CD4-positive, alpha-beta memory T cell (primary cell): ENCODE measurements at regions of chr2 and their contacts with region 1.

Region 1: GRCh38 chr2:174341286-174341994 is 6.7 kb downstream of the SP9 start:
- DNase-seq: peak; percentile 83 to 89 (median 86)
- H3K4me3 ChIP-seq: peak overlapping the region in 1 of 2 donors; percentile 18
- H3K4me3 Mint-ChIP-seq: peak overlapping the region; percentile 13 to 95 (median 79)
- H3K27ac ChIP-seq: no peak overlapping the region
- H3K27ac Mint-ChIP-seq: peak overlapping the region in 6 of 7 donors; percentile 65 to 97 (median 88)
- H3K4me1 ChIP-seq: peaks cover 56% of the 10 kb centered on the region
- H3K4me1 Mint-ChIP-seq: peaks cover 18 to 48% (median 32%) of the 10 kb centered on the region in 4 donors
- H3K27me3 ChIP-seq: peaks cover 70% of the 10 kb centered on the region
- H3K27me3 Mint-ChIP-seq: peaks cover 47 to 51% of the 10 kb centered on the region in 2 donors

Region 2: DNA sequence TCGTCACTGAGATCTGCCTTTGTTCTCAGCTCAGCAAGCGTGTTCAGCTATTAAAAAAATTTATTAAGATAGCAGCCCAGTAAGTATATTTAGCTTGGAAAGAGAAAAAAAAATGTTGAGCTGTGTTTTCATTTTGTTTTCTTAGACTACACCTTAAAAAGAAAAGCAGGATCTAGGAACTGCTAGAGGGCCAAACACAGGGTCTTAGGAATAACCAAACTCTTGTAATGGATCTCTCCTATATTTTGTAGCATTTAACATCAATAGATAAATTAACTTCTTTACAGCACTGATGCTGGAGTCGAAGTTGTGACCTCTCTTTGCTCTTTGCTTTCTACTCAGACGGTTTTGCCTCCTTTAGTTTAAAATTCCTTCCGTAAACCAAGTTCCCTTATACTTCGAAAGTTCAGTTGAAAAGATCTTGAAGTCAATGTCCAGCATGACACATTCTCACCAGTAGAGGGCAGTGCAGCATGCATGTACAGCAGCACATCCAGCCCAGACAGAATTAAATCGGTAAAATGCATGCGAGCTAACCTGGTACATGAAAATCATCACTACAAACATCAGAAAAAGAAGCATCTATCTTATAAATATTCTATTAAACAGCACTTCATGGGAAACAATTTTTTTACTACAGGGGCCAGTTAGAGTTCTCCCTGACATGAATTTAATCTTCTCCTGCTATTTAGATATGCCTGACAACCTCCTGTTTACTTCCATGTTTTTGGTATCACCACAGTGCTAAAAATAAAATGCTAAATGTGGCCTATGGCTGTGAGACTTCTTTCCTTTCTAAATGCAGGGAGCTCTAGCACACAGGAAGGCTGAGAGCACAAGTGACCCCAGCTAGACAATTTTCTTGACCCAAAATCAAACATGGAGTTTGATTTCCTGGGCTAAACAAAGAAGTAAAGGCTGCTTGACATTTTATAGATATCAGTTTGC is 1314.0 kb before region 1 on chr2:
- CTCF ChIA-PET with region 1: interaction called, 33 read pairs
- POLR2A ChIA-PET with region 1: no interaction called
- intact Hi-C with region 1: loop called (anchors 1 kb)
- DNase-seq: peak; percentile 62 to 68 (median 65)
- H3K4me3 ChIP-seq: no peak overlapping the region
- H3K4me3 Mint-ChIP-seq: peak overlapping the region in 1 of 8 donors; percentile 41
- H3K27ac ChIP-seq: no peak overlapping the region
- H3K27ac Mint-ChIP-seq: no peak overlapping the region
- H3K4me1 ChIP-seq: no peaks in the 10 kb centered on the region
- H3K4me1 Mint-ChIP-seq: peaks cover 0 to 3% (median 1%) of the 10 kb centered on the region in 4 donors
- H3K27me3 ChIP-seq: no peaks in the 10 kb centered on the region
- H3K27me3 Mint-ChIP-seq: peaks cover 3 to 10% of the 10 kb centered on the region in 2 donors

Region 3: DNA sequence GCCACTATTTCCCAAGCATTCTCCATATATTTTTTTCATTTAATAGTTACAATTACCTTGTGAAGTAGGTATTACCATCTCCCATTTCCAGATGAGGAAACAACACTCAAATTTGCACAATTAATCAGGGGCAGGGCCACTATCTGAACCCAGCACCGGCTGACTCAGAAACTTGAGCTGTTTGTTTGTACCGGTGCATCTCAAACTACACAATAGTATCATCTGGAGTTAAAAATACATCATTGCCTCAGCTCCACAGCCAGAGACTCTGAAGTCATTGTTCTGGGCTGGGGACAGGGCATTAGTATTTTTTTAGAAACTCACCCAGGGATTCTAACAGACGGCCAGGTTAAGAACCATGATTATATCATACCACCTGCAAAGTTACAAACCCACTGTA is 930.9 kb before region 1 on chr2:
- CTCF ChIA-PET with region 1: interaction called, 15 read pairs
- POLR2A ChIA-PET with region 1: no interaction called
- intact Hi-C with region 1: no loop called
- DNase-seq: no peak
- H3K4me3 ChIP-seq: no peak overlapping the region
- H3K4me3 Mint-ChIP-seq: no peak overlapping the region
- H3K27ac ChIP-seq: no peak overlapping the region
- H3K27ac Mint-ChIP-seq: no peak overlapping the region
- H3K4me1 ChIP-seq: no peaks in the 10 kb centered on the region
- H3K4me1 Mint-ChIP-seq: no peaks in the 10 kb centered on the region
- H3K27me3 ChIP-seq: no peaks in the 10 kb centered on the region
- H3K27me3 Mint-ChIP-seq: peaks cover 17 to 18% of the 10 kb centered on the region in 2 donors

Region 4: GRCh38 chr2:173965329-173966025 is 376.0 kb before region 1 on chr2 and contains the start of gene SP3:
- CTCF ChIA-PET with region 1: no interaction called
- POLR2A ChIA-PET with region 1: interaction called, 4 read pairs
- intact Hi-C with region 1: loop called (anchors 2 kb)
- DNase-seq: peak; percentile 95 to 97 (median 96)
- H3K4me3 ChIP-seq: peak within 1 kb of the TSS; percentile 53 to 83
- H3K4me3 Mint-ChIP-seq: peak within 1 kb of the TSS; percentile 90 to 99 (median 96)
- H3K27ac ChIP-seq: peak within 1 kb of the TSS; percentile 96
- H3K27ac Mint-ChIP-seq: peak within 1 kb of the TSS; percentile 94 to 100 (median 98)
- H3K4me1 ChIP-seq: peaks cover 33% of the 10 kb centered on the region
- H3K4me1 Mint-ChIP-seq: peaks cover 23 to 51% (median 35%) of the 10 kb centered on the region in 4 donors
- H3K27me3 ChIP-seq: no peaks in the 10 kb centered on the region
- H3K27me3 Mint-ChIP-seq: no peaks in the 10 kb centered on the region
- total RNA-seq, gene SP3: 117 to 130 TPM

Region 5: GRCh38 chr2:174248187-174248997 is 93.0 kb before region 1 on chr2 and contains the start of gene OLA1:
- CTCF ChIA-PET with region 1: interaction called, 10 read pairs
- POLR2A ChIA-PET with region 1: interaction called, 4 read pairs
- intact Hi-C with region 1: loop called (anchors 2 kb)
- DNase-seq: peak; percentile 93 to 99 (median 95)
- H3K4me3 ChIP-seq: peak within 1 kb of the TSS; percentile 84 to 87
- H3K4me3 Mint-ChIP-seq: peak within 1 kb of the TSS; percentile 79 to 88 (median 85)
- H3K27ac ChIP-seq: peak within 1 kb of the TSS; percentile 78
- H3K27ac Mint-ChIP-seq: peak within 1 kb of the TSS; percentile 63 to 87 (median 80)
- H3K4me1 ChIP-seq: peaks cover 14% of the 10 kb centered on the region
- H3K4me1 Mint-ChIP-seq: peaks cover 11 to 32% (median 19%) of the 10 kb centered on the region in 4 donors
- H3K27me3 ChIP-seq: no peaks in the 10 kb centered on the region
- H3K27me3 Mint-ChIP-seq: no peaks in the 10 kb centered on the region
- total RNA-seq, gene OLA1: 31.1 to 31.2 TPM